ENCODE measurements at regions of chr9 and their contacts with region 1.

Region 1: DNA sequence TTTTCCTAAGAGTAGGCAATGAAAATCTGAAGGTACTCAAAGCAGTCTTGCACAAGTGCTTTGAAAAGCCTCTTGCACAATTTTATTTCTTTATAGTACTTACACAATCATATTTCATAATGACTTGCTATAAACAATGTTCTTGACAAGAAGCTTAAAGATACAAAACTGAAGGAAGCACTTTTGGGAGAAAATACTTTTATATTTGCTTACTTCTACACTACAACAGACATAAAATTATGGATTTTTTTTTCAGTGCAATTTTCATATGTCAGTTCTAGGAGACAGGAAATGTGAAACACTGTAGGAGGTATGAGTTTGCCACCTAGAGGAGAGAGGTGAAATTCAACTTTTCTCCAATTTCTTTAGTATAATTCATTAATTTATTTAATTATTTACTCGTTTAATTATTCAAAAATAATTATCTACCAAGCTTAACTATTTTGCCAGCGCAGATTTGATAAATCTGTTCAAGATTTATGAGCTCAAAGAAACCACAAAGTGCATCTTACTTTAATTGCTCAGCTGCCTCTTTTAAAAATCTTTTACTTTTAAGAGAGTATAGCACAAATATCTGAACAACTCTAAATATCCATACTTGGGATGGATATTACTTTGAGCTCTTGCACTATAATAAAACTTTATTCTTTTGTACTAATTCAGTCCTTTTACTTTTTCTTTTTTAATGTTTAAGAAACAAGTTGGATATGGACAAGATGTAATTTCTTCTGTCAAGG is 29.0 kb upstream of the CDKN2B start:
- DNase-seq: peak in 1 of 2 experiments; percentile 37
- H3K4me3 ChIP-seq: no peak overlapping the region
- H3K4me1 ChIP-seq: no peaks in the 10 kb centered on the region; the same call in 1 of the 2 replicates
- H3K27me3 ChIP-seq: no peaks in the 10 kb centered on the region

Region 2: DNA sequence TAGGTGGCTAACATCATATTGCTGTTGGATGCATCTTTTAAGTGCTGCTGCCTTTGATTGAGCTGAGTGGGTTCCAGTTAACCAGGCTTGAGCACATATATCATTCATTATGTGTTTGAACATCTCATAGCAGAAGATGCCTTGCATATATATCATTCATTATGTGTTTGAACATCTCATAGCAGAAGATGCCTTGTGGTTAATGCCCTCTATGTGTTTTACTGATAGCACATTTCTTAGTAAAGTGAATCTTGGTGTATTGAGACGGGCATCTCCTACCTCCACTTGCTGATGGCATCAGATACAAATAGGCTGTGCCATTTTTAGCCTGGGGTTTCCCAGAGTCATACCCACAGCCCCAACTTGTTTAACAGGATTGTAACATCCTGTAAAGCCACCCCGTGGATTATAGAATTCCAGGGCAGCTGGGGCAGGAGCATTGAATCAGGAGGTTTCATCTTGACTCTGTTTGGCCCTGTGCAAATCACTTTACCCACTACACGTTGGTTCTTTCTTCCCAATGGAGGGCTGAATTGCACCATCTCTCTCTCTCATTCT is 209.2 kb before region 1 on chr9:
- in situ Hi-C with region 1: no loop called
- DNase-seq: no peak
- H3K4me3 ChIP-seq: no peak overlapping the region
- H3K4me1 ChIP-seq: no peaks in the 10 kb centered on the region
- H3K27me3 ChIP-seq: no peaks in the 10 kb centered on the region

Region 3: GRCh38 chr9:21974548-21975409 is 63.3 kb before region 1 on chr9:
- in situ Hi-C with region 1: no loop called
- DNase-seq: no peak
- H3K4me3 ChIP-seq: no peak overlapping the region
- H3K4me1 ChIP-seq: no peaks in the 10 kb centered on the region
- H3K27me3 ChIP-seq: no peaks in the 10 kb centered on the region

Region 4: DNA sequence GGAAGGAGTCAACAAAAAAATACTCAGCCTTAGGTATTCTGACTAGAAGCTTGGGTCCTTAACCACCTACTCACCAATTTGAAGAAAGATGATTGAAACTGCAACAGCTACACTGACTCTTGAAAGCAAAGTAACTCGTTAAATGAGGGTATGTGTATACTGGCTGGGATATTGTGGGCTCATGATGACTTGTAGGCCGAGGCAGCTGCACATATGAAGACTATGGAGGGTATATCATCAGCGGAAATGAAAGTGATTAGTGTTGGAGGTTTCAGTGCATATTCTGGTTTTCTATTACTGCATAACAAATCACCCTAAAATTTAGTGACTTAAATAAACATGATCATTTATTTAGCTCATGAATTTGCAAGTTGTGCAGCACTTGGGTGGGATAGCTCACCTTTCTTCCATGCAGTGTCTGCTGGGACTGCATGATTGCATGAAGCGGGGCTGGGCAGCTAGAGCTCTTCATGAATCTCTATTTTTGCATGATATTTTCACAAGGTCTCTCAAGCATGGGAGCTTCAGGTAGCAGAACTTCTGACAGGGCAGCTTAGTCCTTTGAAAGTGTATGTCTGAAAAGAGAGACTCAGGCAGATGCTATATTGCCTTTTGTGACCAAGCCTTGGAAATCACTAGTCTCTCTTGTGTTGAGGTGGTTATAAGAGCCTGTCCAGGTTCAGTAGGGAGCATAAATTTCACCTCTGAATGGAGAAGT is 67.0 kb after region 1 on chr9:
- in situ Hi-C with region 1: loop called (anchors 10 kb)
- DNase-seq: no peak
- H3K4me3 ChIP-seq: no peak overlapping the region
- H3K4me1 ChIP-seq: no peaks in the 10 kb centered on the region
- H3K27me3 ChIP-seq: no peaks in the 10 kb centered on the region

Region 5: GRCh38 chr9:22469928-22470544 is 431.9 kb after region 1 on chr9:
- in situ Hi-C with region 1: loop called (anchors 25 kb)
- DNase-seq: peak; percentile 34 to 65
- H3K4me3 ChIP-seq: no peak overlapping the region
- H3K4me1 ChIP-seq: no peaks in the 10 kb centered on the region
- H3K27me3 ChIP-seq: no peaks in the 10 kb centered on the region; the same call in 1 of the 2 replicates

Measured in HAP-1 (cell line).